ENCODE measurements at regions of chr13 and their contacts with region 1.

Region 1: GRCh38 chr13:20828539-20829364 is 55.0 kb upstream of the EEF1AKMT1 start:
- DNase-seq: no peak
- H3K4me3 ChIP-seq: peak overlapping the region; percentile 35
- H3K27ac ChIP-seq: no peak overlapping the region
- H3K27me3 ChIP-seq: no peaks in the 10 kb centered on the region
- CTCF ChIP-seq: peak; percentile 89

Region 2: GRCh38 chr13:19863323-19864023 is 965.3 kb before region 1 on chr13 and contains the start of gene ZMYM5:
- CTCF ChIA-PET with region 1: no interaction called
- POLR2A ChIA-PET with region 1: no interaction called
- DNase-seq: peak; percentile 99
- H3K4me3 ChIP-seq: peak within 1 kb of the TSS; percentile 84
- H3K27ac ChIP-seq: peak within 1 kb of the TSS; percentile 94
- H3K27me3 ChIP-seq: no peaks in the 10 kb centered on the region
- CTCF ChIP-seq: no peak
- polyA plus RNA-seq, gene ZMYM5: 9.9 and 15.3 TPM in 2 replicates

Region 3: GRCh38 chr13:20495082-20496023 is 333.4 kb before region 1 on chr13:
- CTCF ChIA-PET with region 1: interaction called, 80 read pairs
- POLR2A ChIA-PET with region 1: no interaction called
- DNase-seq: peak; percentile 39
- H3K4me3 ChIP-seq: peak overlapping the region; percentile 25
- H3K27ac ChIP-seq: peak overlapping the region; percentile 65
- H3K27me3 ChIP-seq: no peaks in the 10 kb centered on the region
- CTCF ChIP-seq: peak; percentile 97

Region 4: DNA sequence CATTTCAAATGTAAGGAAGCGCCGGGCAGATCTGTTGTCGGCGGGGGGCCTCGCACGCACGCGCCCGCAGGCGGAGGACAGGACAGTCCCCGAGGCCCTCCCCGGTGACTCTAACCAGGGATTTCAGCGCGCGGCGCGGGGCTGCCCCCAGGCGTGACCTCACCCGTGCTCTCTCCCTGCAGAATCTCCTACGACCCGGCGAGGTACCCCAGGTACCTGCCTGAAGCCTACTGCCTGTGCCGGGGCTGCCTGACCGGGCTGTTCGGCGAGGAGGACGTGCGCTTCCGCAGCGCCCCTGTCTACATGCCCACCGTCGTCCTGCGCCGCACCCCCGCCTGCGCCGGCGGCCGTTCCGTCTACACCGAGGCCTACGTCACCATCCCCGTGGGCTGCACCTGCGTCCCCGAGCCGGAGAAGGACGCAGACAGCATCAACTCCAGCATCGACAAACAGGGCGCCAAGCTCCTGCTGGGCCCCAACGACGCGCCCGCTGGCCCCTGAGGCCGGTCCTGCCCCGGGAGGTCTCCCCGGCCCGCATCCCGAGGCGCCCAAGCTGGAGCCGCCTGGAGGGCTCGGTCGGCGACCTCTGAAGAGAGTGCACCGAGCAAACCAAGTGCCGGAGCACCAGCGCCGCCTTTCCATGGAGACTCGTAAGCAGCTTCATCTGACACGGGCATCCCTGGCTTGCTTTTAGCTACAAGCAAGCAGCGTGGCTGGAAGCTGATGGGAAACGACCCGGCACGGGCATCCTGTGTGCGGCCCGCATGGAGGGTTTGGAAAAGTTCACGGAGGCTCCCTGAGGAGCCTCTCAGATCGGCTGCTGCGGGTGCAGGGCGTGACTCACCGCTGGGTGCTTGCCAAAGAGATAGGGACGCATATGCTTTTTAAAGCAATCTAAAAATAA is 107.0 kb before region 1 on chr13:
- CTCF ChIA-PET with region 1: interaction called, 10 read pairs
- POLR2A ChIA-PET with region 1: no interaction called
- DNase-seq: peak; percentile 24
- H3K4me3 ChIP-seq: peak overlapping the region; percentile 45
- H3K27ac ChIP-seq: no peak overlapping the region
- H3K27me3 ChIP-seq: peaks cover 6% of the 10 kb centered on the region
- CTCF ChIP-seq: no peak

Region 5: GRCh38 chr13:20814224-20814910 is 14.4 kb before region 1 on chr13:
- CTCF ChIA-PET with region 1: interaction called, 38 read pairs
- POLR2A ChIA-PET with region 1: interaction called, 5 read pairs
- DNase-seq: peak; percentile 91
- H3K4me3 ChIP-seq: peak overlapping the region; percentile 35
- H3K27ac ChIP-seq: peak overlapping the region; percentile 77
- H3K27me3 ChIP-seq: no peaks in the 10 kb centered on the region
- CTCF ChIP-seq: no peak

Region 6: GRCh38 chr13:20869542-20869941 is 40.8 kb after region 1 on chr13:
- CTCF ChIA-PET with region 1: interaction called, 31 read pairs
- POLR2A ChIA-PET with region 1: no interaction called
- DNase-seq: no peak
- H3K4me3 ChIP-seq: no peak overlapping the region
- H3K27ac ChIP-seq: no peak overlapping the region
- H3K27me3 ChIP-seq: no peaks in the 10 kb centered on the region
- CTCF ChIP-seq: peak; percentile 40

Region 7: GRCh38 chr13:21318891-21319532 is 490.3 kb after region 1 on chr13:
- CTCF ChIA-PET with region 1: no interaction called
- POLR2A ChIA-PET with region 1: no interaction called
- DNase-seq: no peak
- H3K4me3 ChIP-seq: no peak overlapping the region
- H3K27ac ChIP-seq: no peak overlapping the region
- H3K27me3 ChIP-seq: no peaks in the 10 kb centered on the region
- CTCF ChIP-seq: no peak